Activated T-helper 2 cell treated with anti-CD3 and anti-CD28 coated beads, Interferon-gamma antibody, Interleukin-2, Interleukin-4, amounts not matched to agents 10 μg/mL and 5 μg/mL and 100 μg/mL, durations not matched to agents 14 hours and 24 hours and 36 hours (primary cell): ENCODE measurements at regions of chr10 and their contacts with region 1.

Region 1: DNA sequence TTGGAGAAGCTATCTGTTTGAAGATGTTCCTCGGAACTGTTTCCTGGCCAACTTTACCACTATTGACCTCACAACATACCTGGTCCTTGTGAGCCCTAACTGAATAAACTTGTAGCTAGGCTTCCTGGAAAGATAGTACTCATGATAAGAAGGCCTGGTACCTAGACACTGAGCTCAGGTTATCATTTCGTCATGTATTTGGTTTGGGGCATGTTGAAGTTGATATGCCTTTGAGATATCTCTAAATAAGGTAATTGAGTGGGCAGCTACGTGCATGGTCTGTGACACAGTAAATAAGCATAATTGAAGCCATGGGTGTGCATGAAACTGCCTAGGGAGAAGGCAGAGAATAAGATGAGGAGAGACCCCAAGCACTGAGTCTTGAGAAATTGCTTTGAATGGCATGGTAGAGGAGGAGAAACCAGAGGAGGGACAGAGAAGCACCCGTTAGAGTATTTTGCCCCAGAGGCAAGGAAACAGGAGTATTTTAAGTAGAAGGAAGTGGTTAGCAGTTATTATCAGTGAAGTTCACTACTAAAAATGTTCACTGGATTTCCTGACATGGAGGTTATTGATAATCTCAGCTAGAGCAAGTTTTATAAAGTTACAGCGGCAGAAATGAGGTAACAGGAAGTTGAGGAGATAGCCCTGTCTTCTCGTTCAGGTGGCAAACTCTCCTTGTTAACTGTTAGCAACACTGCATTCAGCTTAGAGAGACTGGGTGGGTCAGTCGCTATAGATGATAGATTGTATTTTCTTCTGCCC is 55.6 kb downstream of the CC2D2B start:
- DNase-seq: peak; percentile 15
- H3K4me3 Mint-ChIP-seq: peak overlapping the region; percentile 75
- H3K27ac Mint-ChIP-seq: peak overlapping the region; percentile 99
- H3K4me1 Mint-ChIP-seq: peaks cover 32% of the 10 kb centered on the region
- H3K27me3 Mint-ChIP-seq: no peaks in the 10 kb centered on the region

Region 2: GRCh38 chr10:95907456-95908253 is 55.8 kb before region 1 on chr10 and contains the start of gene CC2D2B:
- intact Hi-C with region 1: loop called (anchors 2 kb)
- DNase-seq: peak; percentile 70
- H3K4me3 Mint-ChIP-seq: peak within 1 kb of the TSS; percentile 92
- H3K27ac Mint-ChIP-seq: peak within 1 kb of the TSS; percentile 93
- H3K4me1 Mint-ChIP-seq: peaks cover 18% of the 10 kb centered on the region
- H3K27me3 Mint-ChIP-seq: peaks cover 10% of the 10 kb centered on the region
- total RNA-seq, gene CC2D2B: 0.18 and 0.75 TPM in 2 replicates

Region 3: GRCh38 chr10:96043033-96043932 is 79.9 kb after region 1 on chr10 and contains the start of gene CCNJ:
- intact Hi-C with region 1: loop called (anchors 10 kb)
- DNase-seq: peak; percentile 76
- H3K4me3 Mint-ChIP-seq: peak within 1 kb of the TSS; percentile 92
- H3K27ac Mint-ChIP-seq: peak within 1 kb of the TSS; percentile 73
- H3K4me1 Mint-ChIP-seq: peaks cover 34% of the 10 kb centered on the region
- H3K27me3 Mint-ChIP-seq: peaks cover 4% of the 10 kb centered on the region
- total RNA-seq, gene CCNJ: 8.3 and 9.3 TPM in 2 replicates